GM10248 (cell line): ENCODE measurements at regions of chr22 and their contacts with region 1.

Region 1: GRCh38 chr22:23913661-23914353 is 19.6 kb downstream of the MIF start:
- DNase-seq: peak; percentile 99
- CTCF ChIP-seq: no peak

Region 2: GRCh38 chr22:23613193-23613972 is 300.4 kb before region 1 on chr22:
- CTCF ChIA-PET with region 1: no interaction called
- POLR2A ChIA-PET with region 1: no interaction called
- DNase-seq: no peak
- CTCF ChIP-seq: no peak

Region 3: GRCh38 chr22:23893943-23894709 is 19.7 kb before region 1 on chr22 and contains the start of gene MIF:
- CTCF ChIA-PET with region 1: interaction called, 17 read pairs
- POLR2A ChIA-PET with region 1: interaction called, 13 read pairs
- DNase-seq: peak; percentile 99
- CTCF ChIP-seq: peak; percentile 71

Region 4: DNA sequence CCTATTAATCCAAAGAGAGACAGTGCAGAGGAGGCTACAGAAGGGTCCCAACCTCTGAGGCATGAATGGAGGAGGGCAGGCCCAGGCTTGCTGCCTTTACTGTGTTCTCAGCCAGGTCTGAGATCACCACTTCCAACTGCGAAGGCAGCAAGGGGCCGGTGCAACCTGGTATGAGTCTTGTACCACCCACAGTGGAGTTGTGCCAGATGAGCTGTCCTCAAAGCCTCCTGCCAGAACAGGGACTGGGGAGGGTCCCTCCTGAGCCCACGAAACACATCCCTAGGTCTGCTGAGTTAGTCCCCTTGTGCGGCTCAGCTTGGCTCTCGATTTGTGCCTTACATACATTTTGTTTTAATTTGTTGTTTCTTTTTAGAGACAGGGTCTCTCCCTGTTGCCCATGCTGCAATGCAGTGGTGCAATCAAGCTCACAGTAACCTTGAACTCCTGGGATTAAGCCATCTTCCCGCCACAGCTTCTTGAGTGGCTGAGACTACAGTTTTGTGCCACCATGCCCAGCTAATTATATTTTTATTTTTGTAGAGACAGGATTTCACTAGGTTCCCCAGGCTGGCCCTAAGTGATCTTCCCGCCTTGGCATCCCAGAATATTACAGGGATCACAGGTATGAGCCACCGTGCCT is 10.4 kb before region 1 on chr22:
- CTCF ChIA-PET with region 1: interaction called, 19 read pairs
- POLR2A ChIA-PET with region 1: interaction called, 3 read pairs
- DNase-seq: no peak
- CTCF ChIP-seq: no peak

Region 5: DNA sequence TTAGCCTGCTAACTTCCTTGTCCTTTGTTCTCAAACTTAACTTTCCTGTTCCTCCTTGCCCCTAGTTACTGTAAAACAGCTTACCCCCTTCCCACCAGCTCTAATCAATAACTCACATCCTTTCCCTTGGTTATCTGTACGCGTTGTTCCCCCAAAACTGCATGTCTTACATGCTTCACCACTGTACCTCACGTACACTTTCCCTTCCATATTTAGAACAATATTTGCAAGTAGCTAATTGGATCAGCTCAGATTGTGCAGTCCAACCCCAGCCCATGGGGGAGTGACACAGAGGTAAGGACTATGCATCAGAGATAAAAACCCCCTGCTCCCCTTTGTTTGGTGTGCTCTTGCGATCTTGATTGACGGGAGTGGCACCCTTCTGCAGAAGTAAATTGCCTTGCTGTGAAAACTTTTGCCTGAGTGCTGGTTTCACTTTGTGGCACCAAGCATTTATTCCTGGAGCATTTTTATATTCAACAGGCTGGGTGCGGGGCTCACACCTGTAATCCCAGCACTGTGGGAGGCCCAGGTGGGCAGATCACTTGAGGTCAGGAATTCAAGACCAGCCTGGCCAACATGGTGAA is 11.3 kb after region 1 on chr22:
- CTCF ChIA-PET with region 1: interaction called, 12 read pairs
- POLR2A ChIA-PET with region 1: no interaction called
- DNase-seq: no peak
- CTCF ChIP-seq: no peak